CD14-positive monocyte (primary cell): ENCODE measurements at regions of chr20 and their contacts with region 1.

Region 1: GRCh38 chr20:40492716-40493470 is 196.1 kb downstream of the MAFB start:
- DNase-seq: no peak
- H3K4me3 ChIP-seq: no peak overlapping the region
- H3K4me3 Mint-ChIP-seq: no peak overlapping the region
- H3K27ac ChIP-seq: peak overlapping the region; percentile 98 to 99
- H3K27ac Mint-ChIP-seq: peak overlapping the region; percentile 92 to 100 (median 99)
- H3K4me1 ChIP-seq: peaks cover 69 to 71% of the 10 kb centered on the region in 2 donors
- H3K4me1 Mint-ChIP-seq: peaks cover 70% of the 10 kb centered on the region
- H3K27me3 ChIP-seq: no peaks in the 10 kb centered on the region
- H3K27me3 Mint-ChIP-seq: peaks cover 0 to 3% (median 2%) of the 10 kb centered on the region in 3 donors
- CTCF ChIP-seq: no peak

Region 2: DNA sequence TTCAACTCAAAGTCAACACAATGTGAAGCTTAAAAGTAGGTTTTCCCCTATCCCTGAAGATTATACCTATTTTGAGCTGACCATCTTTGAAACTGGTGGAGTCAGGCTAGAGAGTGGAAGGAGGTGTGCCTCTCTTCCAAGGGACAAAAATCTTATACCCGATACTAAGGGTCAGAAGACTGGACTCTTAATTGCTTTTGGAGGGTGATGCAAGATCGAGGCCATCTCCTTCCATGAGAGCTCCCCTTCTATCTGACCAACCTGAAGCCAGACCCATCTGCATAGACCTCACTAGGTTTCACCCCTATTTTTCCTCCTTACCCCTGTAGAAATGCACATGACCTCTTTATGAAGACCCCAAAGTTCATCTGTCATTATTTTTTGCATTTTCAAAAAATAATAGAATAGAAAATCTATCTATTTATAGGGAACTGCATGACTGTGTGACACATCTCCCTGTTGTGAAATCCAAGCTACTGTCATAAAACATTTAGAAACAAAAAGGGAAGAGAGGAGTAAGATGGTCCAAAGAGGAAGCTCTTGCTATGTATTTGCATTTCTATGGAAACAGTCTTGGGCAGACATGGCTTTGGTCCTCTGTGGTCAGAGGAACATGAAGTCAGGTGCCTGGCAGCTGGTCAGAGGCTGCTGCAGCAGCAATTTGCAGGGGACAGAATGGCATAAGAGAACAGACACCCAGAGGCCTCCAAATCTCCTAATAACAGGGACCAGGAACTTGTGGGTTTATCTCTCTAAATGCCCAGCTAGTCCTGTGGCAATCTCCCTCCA is 153.0 kb before region 1 on chr20:
- intact Hi-C with region 1: loop called in 1 of 2 experiments (anchors 5 kb)
- DNase-seq: peak; percentile 97 to 100 (median 99)
- H3K4me3 ChIP-seq: no peak overlapping the region
- H3K4me3 Mint-ChIP-seq: peak overlapping the region in 1 of 2 donors; percentile 50
- H3K27ac ChIP-seq: peak overlapping the region; percentile 93 to 98
- H3K27ac Mint-ChIP-seq: peak overlapping the region; percentile 97 to 100 (median 98)
- H3K4me1 ChIP-seq: peaks cover 19 to 28% of the 10 kb centered on the region in 2 donors
- H3K4me1 Mint-ChIP-seq: peaks cover 30% of the 10 kb centered on the region
- H3K27me3 ChIP-seq: peaks cover 0 to 2% of the 10 kb centered on the region in 2 donors
- H3K27me3 Mint-ChIP-seq: peaks cover 5 to 11% (median 8%) of the 10 kb centered on the region in 3 donors
- CTCF ChIP-seq: no peak

Region 3: GRCh38 chr20:40422656-40423055 is 70.2 kb before region 1 on chr20:
- intact Hi-C with region 1: loop called in 1 of 2 experiments (anchors 10 kb)
- DNase-seq: peak; percentile 52 to 78 (median 70)
- H3K4me3 ChIP-seq: no peak overlapping the region
- H3K4me3 Mint-ChIP-seq: peak overlapping the region in 1 of 2 donors; percentile 4
- H3K27ac ChIP-seq: peak overlapping the region in 1 of 2 donors; percentile 30
- H3K27ac Mint-ChIP-seq: peak overlapping the region in 4 of 7 donors; percentile 50 to 77 (median 68)
- H3K4me1 ChIP-seq: peaks cover 13 to 27% of the 10 kb centered on the region in 2 donors
- H3K4me1 Mint-ChIP-seq: peaks cover 23% of the 10 kb centered on the region
- H3K27me3 ChIP-seq: peaks cover 0 to 10% of the 10 kb centered on the region in 2 donors
- H3K27me3 Mint-ChIP-seq: peaks cover 11 to 15% (median 14%) of the 10 kb centered on the region in 3 donors
- CTCF ChIP-seq: no peak

Region 4: GRCh38 chr20:40457404-40457803 is 35.5 kb before region 1 on chr20:
- intact Hi-C with region 1: no loop called
- DNase-seq: no peak
- H3K4me3 ChIP-seq: no peak overlapping the region
- H3K4me3 Mint-ChIP-seq: no peak overlapping the region
- H3K27ac ChIP-seq: no peak overlapping the region
- H3K27ac Mint-ChIP-seq: no peak overlapping the region
- H3K4me1 ChIP-seq: peaks cover 5 to 9% of the 10 kb centered on the region in 2 donors
- H3K4me1 Mint-ChIP-seq: peaks cover 8% of the 10 kb centered on the region
- H3K27me3 ChIP-seq: peaks cover 4 to 11% of the 10 kb centered on the region in 2 donors
- H3K27me3 Mint-ChIP-seq: peaks cover 14 to 25% (median 17%) of the 10 kb centered on the region in 3 donors
- CTCF ChIP-seq: no peak